A549 (cell line): ENCODE measurements at regions of chr20 and their contacts with region 1.

Region 1: GRCh38 chr20:46013826-46014516 is 5.3 kb downstream of the MMP9 start:
- DNase-seq: peak; percentile 68 to 81
- ATAC-seq: peak; percentile 89 to 93
- H3K4me3 ChIP-seq: peak overlapping the region; percentile 44
- H3K27ac ChIP-seq: peak overlapping the region; percentile 44 to 69; a peak in 2 of 6 replicates
- H3K4me1 ChIP-seq: peaks cover 8% of the 10 kb centered on the region
- CTCF ChIP-seq: peak; percentile 74
- EP300 ChIP-seq: no peak
- POLR2A ChIP-seq: 0 out of 2 replicates have a peak, but pooled peaks have one; percentile 23
- RAD21 ChIP-seq: peak; percentile 53 to 83

Region 2: GRCh38 chr20:45893831-45894230 is 120.1 kb before region 1 on chr20:
- CTCF ChIA-PET with region 1: no interaction called
- POLR2A ChIA-PET with region 1: no interaction called
- DNase-seq: no peak
- ATAC-seq: no peak
- H3K4me3 ChIP-seq: no peak overlapping the region
- H3K27ac ChIP-seq: no peak overlapping the region
- H3K4me1 ChIP-seq: peaks cover 14% of the 10 kb centered on the region
- CTCF ChIP-seq: no peak
- EP300 ChIP-seq: no peak
- POLR2A ChIP-seq: no peak
- RAD21 ChIP-seq: no peak

Region 3: DNA sequence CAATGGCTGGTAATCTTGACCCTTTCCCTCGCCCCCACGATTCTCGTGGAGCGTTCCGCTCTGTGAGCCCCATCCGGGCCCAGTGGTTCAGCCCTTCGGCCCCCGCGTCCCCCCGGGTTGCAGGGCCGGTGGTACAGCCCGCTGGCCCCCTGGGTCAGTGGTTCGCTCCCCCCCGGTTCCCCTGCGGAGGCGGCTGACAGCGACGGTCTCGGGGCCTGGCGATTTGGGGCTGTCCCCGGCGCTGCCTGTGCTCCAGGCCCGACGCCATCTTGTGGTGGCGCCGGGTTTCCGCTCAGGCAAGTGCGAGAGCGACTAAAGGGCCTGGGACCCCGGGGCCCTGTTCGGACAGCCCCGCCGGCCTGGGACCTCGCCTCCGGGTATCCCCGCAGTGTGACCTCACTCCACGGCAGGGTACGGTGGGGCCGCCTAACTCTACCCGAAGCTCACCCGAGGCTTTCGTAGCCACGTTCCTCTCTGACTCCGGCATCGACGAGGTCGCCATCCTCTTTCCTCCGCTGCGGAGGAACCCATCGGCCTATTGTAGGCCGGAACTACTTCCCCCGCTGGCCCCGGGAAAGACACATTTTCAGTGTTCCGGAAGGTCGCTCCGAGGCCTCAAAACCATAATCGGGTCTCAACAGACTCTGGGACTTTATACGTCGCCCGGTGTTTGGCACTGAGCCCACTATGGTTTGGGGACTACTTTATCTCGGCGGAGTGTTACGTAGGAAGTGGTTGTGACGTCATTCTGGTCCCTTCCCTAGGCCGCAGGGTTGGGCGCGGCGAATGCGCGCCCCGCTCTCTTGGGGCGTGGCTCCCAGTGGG is 42.1 kb before region 1 on chr20 and contains the start of gene ZNF335:
- CTCF ChIA-PET with region 1: interaction called, 94 read pairs
- POLR2A ChIA-PET with region 1: no interaction called
- DNase-seq: peak; percentile 92 to 98
- ATAC-seq: peak; percentile 77 to 91
- H3K4me3 ChIP-seq: peak within 1 kb of the TSS; percentile 95
- H3K27ac ChIP-seq: peak within 1 kb of the TSS; percentile 98 to 99
- H3K4me1 ChIP-seq: peaks cover 21% of the 10 kb centered on the region
- CTCF ChIP-seq: no peak
- EP300 ChIP-seq: no peak
- POLR2A ChIP-seq: peak; percentile 53
- RAD21 ChIP-seq: no peak
- polyA plus RNA-seq, gene ZNF335: 7.3 and 8.4 TPM in 2 replicates

Region 4: GRCh38 chr20:46028772-46029371 is 14.9 kb after region 1 on chr20 and contains the start of gene SLC12A5:
- CTCF ChIA-PET with region 1: interaction called, 40 read pairs
- POLR2A ChIA-PET with region 1: no interaction called
- DNase-seq: no peak
- ATAC-seq: no peak
- H3K4me3 ChIP-seq: no peak within 1 kb of the TSS
- H3K27ac ChIP-seq: no peak within 1 kb of the TSS
- H3K4me1 ChIP-seq: no peaks in the 10 kb centered on the region
- CTCF ChIP-seq: no peak
- EP300 ChIP-seq: no peak
- POLR2A ChIP-seq: no peak
- RAD21 ChIP-seq: no peak
- polyA plus RNA-seq, gene SLC12A5: 3.0 and 3.5 TPM in 2 replicates

Region 5: GRCh38 chr20:46078954-46079353 is 65.0 kb after region 1 on chr20:
- CTCF ChIA-PET with region 1: interaction called, 18 read pairs
- POLR2A ChIA-PET with region 1: no interaction called
- DNase-seq: no peak
- ATAC-seq: no peak
- H3K4me3 ChIP-seq: no peak overlapping the region
- H3K27ac ChIP-seq: no peak overlapping the region
- H3K4me1 ChIP-seq: peaks cover under 1% of the 10 kb centered on the region; the same call in 1 of the 3 replicates
- CTCF ChIP-seq: no peak
- EP300 ChIP-seq: no peak
- POLR2A ChIP-seq: no peak
- RAD21 ChIP-seq: no peak

Region 6: DNA sequence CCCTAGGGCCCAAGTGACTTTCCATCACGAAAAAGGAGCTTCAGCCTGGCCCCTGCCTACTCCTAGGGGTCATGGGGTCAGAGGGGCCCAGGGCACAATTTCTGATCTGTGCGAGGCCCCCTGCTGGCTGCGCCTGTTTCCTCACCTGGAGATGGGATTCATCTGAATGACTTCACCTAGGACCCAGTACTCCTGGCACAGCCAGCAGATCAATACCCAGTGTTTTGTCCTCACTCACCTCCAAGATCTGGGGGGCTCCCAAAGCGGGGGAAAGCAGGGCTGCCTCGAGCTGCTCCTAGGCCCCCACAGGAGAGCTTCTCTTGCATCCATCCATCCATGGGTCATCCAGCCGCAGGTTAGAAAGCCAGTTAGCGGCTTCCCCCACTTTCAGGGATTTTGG is 138.0 kb after region 1 on chr20:
- CTCF ChIA-PET with region 1: interaction called, 13 read pairs
- POLR2A ChIA-PET with region 1: no interaction called
- DNase-seq: peak; percentile 14 to 68
- ATAC-seq: peak in 1 of 2 experiments; percentile 87; a peak in 3 of 6 replicates
- H3K4me3 ChIP-seq: no peak overlapping the region
- H3K27ac ChIP-seq: no peak overlapping the region
- H3K4me1 ChIP-seq: no peaks in the 10 kb centered on the region
- CTCF ChIP-seq: peak; percentile 42
- EP300 ChIP-seq: no peak
- POLR2A ChIP-seq: no peak
- RAD21 ChIP-seq: 0 out of 5 replicates have a peak, but pooled peaks of 1 of the 2 experiments have one; percentile 17

Region 7: DNA sequence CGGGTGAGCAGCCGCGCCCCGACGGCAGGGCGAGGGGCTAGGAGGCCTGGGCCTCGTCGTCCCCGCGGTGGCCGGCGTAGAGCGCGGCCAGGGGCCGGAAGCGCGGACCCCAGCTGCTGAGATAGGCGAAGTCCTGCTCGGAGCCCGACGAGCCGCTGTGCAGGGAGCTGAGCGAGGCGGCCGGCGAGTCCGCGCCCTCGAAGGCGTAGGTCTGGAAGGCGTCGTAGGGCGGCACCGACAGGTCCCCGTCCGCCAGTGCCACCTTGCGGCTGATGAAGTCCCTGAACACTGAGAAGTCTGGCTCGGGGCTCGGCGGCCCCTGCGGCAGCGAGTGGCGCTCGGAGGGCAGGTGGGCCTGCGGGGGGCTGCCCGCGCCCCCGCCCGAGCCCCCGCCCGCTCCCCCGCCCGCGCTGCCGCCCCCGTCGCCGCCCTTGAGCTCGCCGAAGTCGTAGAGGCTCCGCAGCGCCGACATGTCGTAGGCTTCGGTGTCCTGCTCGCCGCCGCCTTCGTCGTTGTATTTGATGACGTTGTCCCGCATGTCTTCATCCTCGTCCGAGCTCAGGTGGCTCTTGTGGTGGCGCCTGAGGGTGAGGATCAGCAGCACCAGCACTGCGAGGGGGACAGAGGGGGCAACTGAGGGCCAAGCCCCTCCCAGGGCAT is 160.6 kb after region 1 on chr20:
- CTCF ChIA-PET with region 1: interaction called, 42 read pairs
- POLR2A ChIA-PET with region 1: no interaction called
- DNase-seq: peak; percentile 75 to 87
- ATAC-seq: peak; percentile 84 to 96
- H3K4me3 ChIP-seq: peak overlapping the region; percentile 31; the same call in 1 of the 3 replicates
- H3K27ac ChIP-seq: peak overlapping the region in 1 of 2 experiments; percentile 56; a peak in 1 of 6 replicates
- H3K4me1 ChIP-seq: no peaks in the 10 kb centered on the region
- CTCF ChIP-seq: peak; percentile 68
- EP300 ChIP-seq: no peak
- POLR2A ChIP-seq: no peak
- RAD21 ChIP-seq: peak; percentile 52 to 62